ENCODE measurements at regions of chr2 and their contacts with region 1.

Region 1: GRCh38 chr2:117470311-117471095 is 344.0 kb upstream of the DDX18 start:
- DNase-seq: peak; percentile 52
- ATAC-seq: no peak
- H3K4me3 Mint-ChIP-seq: no peak overlapping the region
- H3K27ac Mint-ChIP-seq: no peak overlapping the region
- H3K4me1 Mint-ChIP-seq: no peaks in the 10 kb centered on the region
- H3K27me3 Mint-ChIP-seq: no peaks in the 10 kb centered on the region

Region 2: GRCh38 chr2:117432746-117433145 is 37.8 kb before region 1 on chr2:
- CTCF ChIA-PET with region 1: no interaction called
- POLR2A ChIA-PET with region 1: no interaction called
- intact Hi-C with region 1: no loop called
- DNase-seq: no peak
- ATAC-seq: no peak
- H3K4me3 Mint-ChIP-seq: no peak overlapping the region
- H3K27ac Mint-ChIP-seq: no peak overlapping the region
- H3K4me1 Mint-ChIP-seq: no peaks in the 10 kb centered on the region
- H3K27me3 Mint-ChIP-seq: no peaks in the 10 kb centered on the region

Region 3: GRCh38 chr2:117771969-117772630 is 301.6 kb after region 1 on chr2:
- CTCF ChIA-PET with region 1: no interaction called
- POLR2A ChIA-PET with region 1: no interaction called
- intact Hi-C with region 1: loop called in 1 of 2 experiments (anchors 5 kb)
- DNase-seq: no peak
- ATAC-seq: no peak
- H3K4me3 Mint-ChIP-seq: no peak overlapping the region
- H3K27ac Mint-ChIP-seq: no peak overlapping the region
- H3K4me1 Mint-ChIP-seq: no peaks in the 10 kb centered on the region
- H3K27me3 Mint-ChIP-seq: peaks cover 25% of the 10 kb centered on the region

Region 4: GRCh38 chr2:117785740-117786139 is 315.2 kb after region 1 on chr2:
- CTCF ChIA-PET with region 1: no interaction called
- POLR2A ChIA-PET with region 1: no interaction called
- intact Hi-C with region 1: loop called in 1 of 2 experiments (anchors 2 kb)
- DNase-seq: peak; percentile 59
- ATAC-seq: peak; percentile 47
- H3K4me3 Mint-ChIP-seq: no peak overlapping the region
- H3K27ac Mint-ChIP-seq: no peak overlapping the region
- H3K4me1 Mint-ChIP-seq: no peaks in the 10 kb centered on the region
- H3K27me3 Mint-ChIP-seq: peaks cover 9% of the 10 kb centered on the region